ENCODE measurements at regions of chr1 and their contacts with region 1.

Region 1: DNA sequence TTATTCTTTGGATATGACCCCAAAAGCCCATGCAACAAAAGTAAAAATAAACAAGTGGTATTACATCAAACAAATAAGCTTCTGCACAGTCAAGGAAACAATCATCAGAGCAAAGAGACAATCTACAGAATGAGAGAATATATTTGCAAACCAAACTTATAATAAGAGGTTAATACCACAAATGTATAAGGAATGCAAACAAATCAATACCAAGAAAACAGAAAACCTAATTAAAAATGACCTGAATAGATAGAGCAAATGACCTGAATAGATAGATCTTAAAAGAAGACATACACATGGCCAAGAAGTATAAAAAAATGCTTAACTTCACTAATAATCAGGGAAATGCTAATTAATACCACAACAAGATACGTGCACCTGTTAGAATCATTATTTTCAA is 1584.2 kb downstream of the BRINP3 start:
- DNase-seq: no peak
- H3K4me3 ChIP-seq: no peak overlapping the region
- H3K27ac ChIP-seq: no peak overlapping the region
- H3K4me1 ChIP-seq: no peaks in the 10 kb centered on the region
- H3K27me3 ChIP-seq: no peaks in the 10 kb centered on the region
- CTCF ChIP-seq: no peak
- EP300 ChIP-seq: no peak
- POLR2A ChIP-seq: no peak

Region 2: GRCh38 chr1:187129132-187129531 is 1764.3 kb before region 1 on chr1:
- in situ Hi-C with region 1: no loop called
- intact Hi-C with region 1: loop called (anchors 5 kb)
- DNase-seq: no peak
- H3K4me3 ChIP-seq: no peak overlapping the region
- H3K27ac ChIP-seq: no peak overlapping the region
- H3K4me1 ChIP-seq: no peaks in the 10 kb centered on the region
- H3K27me3 ChIP-seq: no peaks in the 10 kb centered on the region
- CTCF ChIP-seq: no peak
- EP300 ChIP-seq: no peak
- POLR2A ChIP-seq: no peak

Region 3: DNA sequence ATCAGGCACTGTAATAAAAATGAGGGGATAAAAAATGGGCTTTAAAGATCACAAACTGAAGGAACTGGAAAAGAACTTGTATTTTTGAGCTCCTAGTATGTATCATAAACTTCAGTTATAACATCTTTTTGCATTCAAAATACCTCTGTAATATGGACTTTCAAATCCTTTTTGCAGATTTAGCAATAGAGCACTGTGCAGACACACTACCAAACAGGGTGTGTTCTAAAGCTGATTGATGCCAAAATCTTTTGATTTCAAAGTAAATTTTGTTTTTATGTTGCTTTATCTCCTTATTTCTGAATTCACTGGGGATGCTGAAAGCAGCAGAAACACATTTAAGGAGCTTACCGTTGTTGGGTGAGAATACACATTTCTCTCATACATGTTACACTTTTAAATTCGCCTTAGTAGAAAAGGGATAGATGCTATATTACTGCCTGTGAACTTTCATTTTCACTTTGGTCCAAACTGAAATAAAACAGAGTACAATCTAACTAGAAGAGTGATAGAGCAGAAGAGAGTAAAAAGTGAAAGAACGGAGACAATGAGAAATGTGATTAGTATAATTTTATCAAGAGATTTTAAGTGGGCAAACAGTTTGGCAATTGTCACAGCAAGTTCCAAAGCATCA is 457.7 kb after region 1 on chr1:
- in situ Hi-C with region 1: no loop called
- intact Hi-C with region 1: no loop called
- DNase-seq: no peak
- H3K4me3 ChIP-seq: peak overlapping the region in 1 of 4 donors; percentile 8
- H3K27ac ChIP-seq: no peak overlapping the region
- H3K4me1 ChIP-seq: no peaks in the 10 kb centered on the region
- H3K27me3 ChIP-seq: no peaks in the 10 kb centered on the region
- CTCF ChIP-seq: no peak
- EP300 ChIP-seq: no peak
- POLR2A ChIP-seq: no peak

Measured in transverse colon (tissue), 4 donors.